MCF 10A (cell line): ENCODE measurements at regions of chr1 and their contacts with region 1.

Region 1: DNA sequence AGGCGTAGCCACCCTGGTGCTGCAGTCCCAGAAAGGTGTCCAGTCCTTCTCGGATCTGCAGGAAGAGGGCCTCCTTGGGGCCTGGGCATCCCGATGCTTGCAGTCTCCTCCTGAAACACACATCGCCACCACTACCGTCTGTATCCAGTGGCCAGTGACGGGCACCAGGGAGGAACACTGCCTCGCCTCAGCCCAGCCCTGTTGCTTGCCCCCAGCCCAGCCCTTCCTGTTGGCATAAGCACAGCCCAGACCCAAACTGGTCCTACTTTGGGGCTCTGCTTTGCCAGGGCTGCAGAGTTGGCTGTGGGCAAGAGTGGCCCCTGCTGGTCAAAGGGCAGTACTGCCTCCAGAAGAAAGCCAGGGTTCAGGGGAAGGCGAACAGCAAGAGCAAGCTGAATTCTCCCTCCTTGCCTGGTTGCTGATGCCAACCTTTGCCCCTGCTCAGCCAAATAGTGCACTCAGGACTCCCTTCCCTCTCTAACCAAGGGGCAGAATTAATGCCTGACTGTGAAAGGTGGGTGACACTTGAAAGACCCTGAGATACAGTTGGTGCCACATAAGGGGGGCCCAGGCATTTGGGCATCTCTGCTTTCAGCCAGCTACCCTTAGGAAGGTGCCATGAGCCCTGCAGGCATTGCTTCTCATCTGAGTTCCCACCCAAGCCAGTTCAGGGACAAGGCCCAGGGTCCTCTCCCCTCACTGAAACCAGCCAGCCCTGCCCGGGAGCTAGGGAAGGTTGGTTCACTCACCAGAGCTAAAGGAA is 11.1 kb upstream of the ARHGEF2 start:
- DNase-seq: peak; percentile 85
- H3K4me3 Mint-ChIP-seq: no peak overlapping the region
- H3K27ac Mint-ChIP-seq: no peak overlapping the region
- H3K4me1 Mint-ChIP-seq: peaks cover 14% of the 10 kb centered on the region
- H3K27me3 Mint-ChIP-seq: no peaks in the 10 kb centered on the region
- CTCF ChIP-seq: peak; percentile 99

Region 2: GRCh38 chr1:155598842-155599331 is 390.5 kb before region 1 on chr1:
- CTCF ChIA-PET with region 1: no interaction called
- POLR2A ChIA-PET with region 1: no interaction called
- intact Hi-C with region 1: no loop called
- DNase-seq: no peak
- H3K4me3 Mint-ChIP-seq: no peak overlapping the region
- H3K27ac Mint-ChIP-seq: no peak overlapping the region
- H3K4me1 Mint-ChIP-seq: peaks cover 11% of the 10 kb centered on the region
- H3K27me3 Mint-ChIP-seq: no peaks in the 10 kb centered on the region
- CTCF ChIP-seq: no peak

Region 3: DNA sequence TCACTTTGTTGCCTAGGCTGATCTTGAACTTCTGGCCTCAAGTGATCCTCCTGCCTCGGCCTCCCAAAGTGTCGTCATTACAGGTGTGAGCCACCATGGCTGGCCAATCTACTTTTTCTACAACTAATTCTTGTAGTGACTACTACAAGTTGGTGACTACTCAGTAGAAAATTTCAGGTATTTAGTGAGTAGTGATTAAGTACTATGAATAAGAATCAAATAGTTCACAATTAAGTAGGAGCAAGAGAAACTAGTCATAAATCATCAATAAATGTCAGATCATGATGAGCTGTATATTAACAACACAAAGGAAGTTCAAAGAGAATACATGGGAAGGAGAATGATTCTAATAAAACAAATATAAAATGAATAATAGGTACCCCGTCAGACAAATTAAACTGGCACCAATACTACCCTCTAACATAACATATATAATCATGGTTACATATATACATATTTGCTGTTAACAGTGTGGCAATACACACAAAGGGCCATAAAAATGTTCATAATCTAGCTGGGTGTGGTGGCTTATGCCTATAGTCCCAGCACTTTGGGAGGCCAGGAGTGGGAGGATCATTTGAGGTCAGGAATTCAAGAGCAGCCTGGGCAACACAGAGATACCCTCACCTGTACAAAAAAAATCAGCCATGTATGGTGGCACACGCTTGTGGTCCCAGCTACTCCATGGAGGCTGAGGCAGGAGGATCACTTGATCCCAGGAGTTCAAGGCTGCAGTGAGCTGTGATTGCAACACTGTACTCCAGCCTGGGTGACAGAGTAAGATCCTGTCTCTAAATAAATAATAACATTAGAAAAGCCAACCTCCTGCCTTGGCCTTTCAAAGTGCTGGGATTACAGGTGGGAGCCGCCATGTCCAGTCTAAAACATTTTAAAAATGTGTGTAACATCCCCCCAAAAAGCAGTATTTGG is 319.9 kb before region 1 on chr1:
- CTCF ChIA-PET with region 1: no interaction called
- POLR2A ChIA-PET with region 1: no interaction called
- intact Hi-C with region 1: no loop called
- DNase-seq: no peak
- H3K4me3 Mint-ChIP-seq: no peak overlapping the region
- H3K27ac Mint-ChIP-seq: no peak overlapping the region
- H3K4me1 Mint-ChIP-seq: no peaks in the 10 kb centered on the region
- H3K27me3 Mint-ChIP-seq: no peaks in the 10 kb centered on the region
- CTCF ChIP-seq: no peak

Region 4: DNA sequence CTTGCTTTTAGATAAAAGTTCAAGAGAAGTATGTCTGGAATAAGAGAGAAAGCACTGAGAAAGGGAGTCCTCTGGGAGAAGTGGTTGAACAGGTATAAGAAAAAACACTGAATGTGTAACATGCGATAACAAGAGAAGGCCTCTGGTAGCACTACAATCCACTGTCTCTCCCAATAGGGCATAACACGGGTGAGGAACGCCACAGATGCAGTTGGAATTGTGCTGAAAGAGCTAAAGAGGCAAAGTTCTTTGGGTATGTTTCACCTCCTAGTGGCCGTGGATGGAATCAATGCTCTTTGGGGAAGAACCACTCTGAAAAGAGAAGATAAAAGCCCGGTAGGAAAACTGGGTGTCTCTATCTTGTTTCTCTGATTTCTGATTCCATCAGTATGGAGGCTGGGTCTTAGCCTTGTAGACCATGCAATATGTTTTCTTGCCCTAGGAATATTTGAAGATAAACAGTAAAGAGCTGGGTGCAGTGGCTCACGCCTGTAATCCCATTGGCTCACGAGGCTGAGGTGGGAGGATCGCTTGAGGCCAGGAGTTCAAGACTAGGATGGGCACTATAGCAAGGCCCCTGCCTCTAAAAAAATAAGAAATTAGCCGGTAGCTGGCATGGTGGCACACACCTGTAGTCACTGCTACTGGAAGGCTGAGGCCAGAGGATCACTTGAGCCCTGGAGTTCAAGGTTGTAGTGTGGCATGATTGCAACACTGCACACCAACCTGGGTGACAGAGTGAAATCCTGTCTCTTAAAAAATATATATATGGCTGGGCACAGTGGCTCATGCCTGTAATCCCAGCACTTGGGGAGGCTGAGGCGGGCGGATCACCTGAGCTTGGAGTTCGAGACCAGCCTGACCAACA is 260.2 kb before region 1 on chr1:
- CTCF ChIA-PET with region 1: interaction called, 4 read pairs
- POLR2A ChIA-PET with region 1: no interaction called
- intact Hi-C with region 1: loop called (anchors 10 kb)
- DNase-seq: peak; percentile 80
- H3K4me3 Mint-ChIP-seq: no peak overlapping the region
- H3K27ac Mint-ChIP-seq: peak overlapping the region; percentile 39
- H3K4me1 Mint-ChIP-seq: no peaks in the 10 kb centered on the region
- H3K27me3 Mint-ChIP-seq: no peaks in the 10 kb centered on the region
- CTCF ChIP-seq: peak; percentile 59

Region 5: GRCh38 chr1:155946633-155947219 is 42.7 kb before region 1 on chr1:
- CTCF ChIA-PET with region 1: interaction called, 35 read pairs
- POLR2A ChIA-PET with region 1: interaction called, 196 read pairs
- intact Hi-C with region 1: no loop called
- DNase-seq: no peak
- H3K4me3 Mint-ChIP-seq: no peak overlapping the region
- H3K27ac Mint-ChIP-seq: peak overlapping the region; percentile 14
- H3K4me1 Mint-ChIP-seq: peaks cover 30% of the 10 kb centered on the region
- H3K27me3 Mint-ChIP-seq: no peaks in the 10 kb centered on the region
- CTCF ChIP-seq: no peak

Region 6: DNA sequence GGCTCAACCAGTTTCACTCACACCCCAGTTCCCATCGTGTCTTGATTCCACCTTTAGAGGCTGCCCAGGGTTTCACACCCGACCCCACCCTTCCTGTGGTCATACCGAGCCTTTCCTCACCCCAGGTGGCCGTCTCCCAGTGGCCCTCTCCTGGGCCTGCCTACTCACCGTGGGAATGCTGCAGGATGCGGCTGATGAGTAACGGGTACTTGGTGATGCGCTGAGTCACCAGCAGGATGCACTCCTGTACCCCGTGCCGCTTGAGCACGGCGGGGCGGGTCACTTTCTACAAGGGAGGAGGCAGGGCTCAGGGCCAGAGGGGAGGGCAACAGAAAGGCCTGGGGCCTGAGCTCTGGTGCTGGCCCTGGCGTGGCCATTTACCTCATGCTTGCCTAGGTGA is 27.5 kb before region 1 on chr1:
- CTCF ChIA-PET with region 1: interaction called, 41 read pairs
- POLR2A ChIA-PET with region 1: interaction called, 259 read pairs
- intact Hi-C with region 1: loop called (anchors 1 kb)
- DNase-seq: peak; percentile 100
- H3K4me3 Mint-ChIP-seq: peak overlapping the region; percentile 75
- H3K27ac Mint-ChIP-seq: peak overlapping the region; percentile 98
- H3K4me1 Mint-ChIP-seq: peaks cover 40% of the 10 kb centered on the region
- H3K27me3 Mint-ChIP-seq: no peaks in the 10 kb centered on the region
- CTCF ChIP-seq: peak; percentile 42

Region 7: GRCh38 chr1:155967341-155968050 is 21.9 kb before region 1 on chr1:
- CTCF ChIA-PET with region 1: interaction called, 37 read pairs
- POLR2A ChIA-PET with region 1: interaction called, 259 read pairs
- intact Hi-C with region 1: loop called (anchors 1 kb)
- DNase-seq: no peak
- H3K4me3 Mint-ChIP-seq: no peak overlapping the region
- H3K27ac Mint-ChIP-seq: peak overlapping the region; percentile 76
- H3K4me1 Mint-ChIP-seq: peaks cover 41% of the 10 kb centered on the region
- H3K27me3 Mint-ChIP-seq: no peaks in the 10 kb centered on the region
- CTCF ChIP-seq: no peak

Region 8: DNA sequence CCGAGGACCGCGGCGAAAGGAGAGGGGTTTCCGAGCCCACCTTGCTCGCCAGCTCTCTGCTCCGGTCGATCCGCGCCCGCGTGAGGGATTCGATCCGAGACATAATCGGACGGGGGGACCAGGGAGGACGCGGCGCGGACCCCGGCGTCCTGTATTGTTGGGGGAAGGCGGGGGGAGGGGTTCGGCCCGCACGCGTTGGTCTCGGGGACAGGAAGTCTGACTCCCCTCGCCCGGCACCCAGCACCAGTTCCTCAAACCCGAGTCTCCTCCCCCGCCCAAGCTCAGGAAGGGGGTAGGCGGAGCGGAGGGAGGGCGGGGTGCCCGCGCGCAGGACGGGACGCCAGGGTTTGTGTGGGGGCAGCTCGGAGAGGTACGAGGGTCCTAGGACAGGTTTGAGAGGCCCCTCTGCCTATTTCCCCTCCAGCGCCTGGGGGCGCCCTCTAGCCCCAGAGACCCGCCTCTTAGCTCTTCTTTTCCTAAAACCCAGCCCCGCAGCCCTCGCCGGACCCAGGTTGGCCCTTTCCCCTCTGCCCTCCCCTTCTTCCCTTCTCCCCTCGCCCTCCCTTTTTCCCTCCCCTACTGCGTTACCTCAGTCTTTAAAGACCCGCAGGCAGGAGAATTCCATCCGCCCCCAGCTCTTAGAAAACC is 11.0 kb before region 1 on chr1 and contains the start of gene ARHGEF2:
- CTCF ChIA-PET with region 1: interaction called, 58 read pairs
- POLR2A ChIA-PET with region 1: interaction called, 20 read pairs
- intact Hi-C with region 1: no loop called
- DNase-seq: peak; percentile 89
- H3K4me3 Mint-ChIP-seq: peak within 1 kb of the TSS; percentile 81
- H3K27ac Mint-ChIP-seq: peak within 1 kb of the TSS; percentile 90
- H3K4me1 Mint-ChIP-seq: peaks cover 83% of the 10 kb centered on the region
- H3K27me3 Mint-ChIP-seq: no peaks in the 10 kb centered on the region
- CTCF ChIP-seq: no peak
- total RNA-seq, gene ARHGEF2: 498 and 555 TPM in 2 replicates